PC-9 (cell line): ENCODE measurements at regions of chr7 and their contacts with region 1.

Region 1: DNA sequence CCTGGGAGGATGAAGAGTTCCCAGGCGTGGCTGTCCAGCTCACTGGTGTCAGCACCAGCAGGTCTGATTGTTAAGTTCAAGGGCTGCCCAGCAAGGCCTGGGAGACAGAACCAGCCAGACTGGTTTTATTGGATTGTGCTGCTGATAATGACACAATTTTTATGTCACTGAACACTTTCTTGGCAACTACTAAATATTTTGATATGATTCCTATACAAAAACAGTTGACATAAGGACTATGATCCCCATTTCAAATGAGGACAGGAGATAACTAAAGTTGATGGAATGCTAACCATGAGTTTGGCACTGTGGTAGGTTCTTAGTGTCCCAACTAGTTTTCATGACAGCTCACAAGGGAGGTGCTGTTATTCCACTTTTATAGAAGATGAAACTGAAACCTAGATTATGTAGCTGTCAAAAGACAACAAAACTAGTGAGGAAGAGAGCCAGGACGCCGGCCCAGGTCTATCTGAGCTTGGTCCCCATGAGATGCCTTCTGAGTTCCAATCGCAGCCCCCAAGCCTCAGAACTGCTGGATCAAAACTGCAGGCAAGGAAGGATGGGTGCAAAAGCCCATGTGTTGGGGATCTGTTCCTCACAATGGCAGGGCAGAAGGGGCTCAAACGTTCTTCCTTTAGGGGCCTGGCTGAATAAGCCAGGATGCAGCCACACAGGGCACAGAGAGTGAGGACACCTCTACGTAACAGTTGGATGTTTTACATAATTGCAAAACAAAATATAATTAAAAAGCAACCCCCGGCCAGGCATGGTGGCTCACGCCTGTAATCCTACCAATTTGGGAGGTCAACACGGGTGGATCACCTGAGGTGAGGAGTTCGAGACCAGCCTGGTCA is 52.8 kb downstream of the COBL start:
- DNase-seq: peak; percentile 84 to 100
- H3K4me3 ChIP-seq: peak overlapping the region; percentile 45; the same call in 1 of the 2 replicates
- H3K27ac ChIP-seq: peak overlapping the region; percentile 68
- H3K4me1 ChIP-seq: peaks cover 36% of the 10 kb centered on the region
- H3K27me3 ChIP-seq: no peaks in the 10 kb centered on the region
- CTCF ChIP-seq: no peak

Region 2: DNA sequence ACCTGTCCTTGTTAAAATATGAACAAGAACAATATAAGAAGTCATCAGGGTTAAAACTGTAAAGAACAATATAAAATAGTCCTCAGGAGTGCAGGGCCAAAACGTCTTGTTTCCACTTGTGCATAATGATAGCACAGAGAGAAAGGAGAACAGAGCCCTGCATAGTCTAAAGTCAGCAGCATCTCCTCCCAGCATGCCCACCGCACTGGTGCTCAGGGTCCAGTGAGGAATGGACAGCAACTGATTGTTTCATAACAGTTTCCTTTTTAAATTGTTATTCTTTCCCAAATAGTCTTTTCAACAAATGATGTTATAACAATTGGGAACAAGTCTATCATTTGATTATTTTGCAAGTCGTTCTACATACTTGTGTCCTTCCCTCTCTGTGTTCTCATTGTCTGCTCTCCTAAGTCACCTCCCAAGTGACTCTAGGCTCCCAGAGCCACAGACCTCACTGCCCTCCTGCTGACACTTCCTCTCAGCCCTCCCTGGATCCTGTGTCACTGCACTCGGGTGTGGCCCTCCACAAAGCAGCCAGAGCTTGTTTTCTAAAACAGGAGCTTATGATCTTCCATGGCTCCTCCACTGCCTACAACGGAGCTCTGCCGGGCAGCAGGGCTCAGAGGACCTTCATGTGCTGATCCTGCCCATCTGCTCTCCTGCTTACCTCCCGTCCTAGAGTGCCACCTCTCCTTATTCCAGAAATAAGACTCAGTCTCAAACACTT is 25.2 kb after region 1 on chr7:
- CTCF ChIA-PET with region 1: no interaction called
- POLR2A ChIA-PET with region 1: no interaction called
- intact Hi-C with region 1: loop called (anchors 2 kb)
- DNase-seq: peak in 1 of 2 experiments; percentile 52
- H3K4me3 ChIP-seq: no peak overlapping the region
- H3K27ac ChIP-seq: no peak overlapping the region
- H3K4me1 ChIP-seq: peaks cover 21% of the 10 kb centered on the region
- H3K27me3 ChIP-seq: no peaks in the 10 kb centered on the region
- CTCF ChIP-seq: no peak

Region 3: DNA sequence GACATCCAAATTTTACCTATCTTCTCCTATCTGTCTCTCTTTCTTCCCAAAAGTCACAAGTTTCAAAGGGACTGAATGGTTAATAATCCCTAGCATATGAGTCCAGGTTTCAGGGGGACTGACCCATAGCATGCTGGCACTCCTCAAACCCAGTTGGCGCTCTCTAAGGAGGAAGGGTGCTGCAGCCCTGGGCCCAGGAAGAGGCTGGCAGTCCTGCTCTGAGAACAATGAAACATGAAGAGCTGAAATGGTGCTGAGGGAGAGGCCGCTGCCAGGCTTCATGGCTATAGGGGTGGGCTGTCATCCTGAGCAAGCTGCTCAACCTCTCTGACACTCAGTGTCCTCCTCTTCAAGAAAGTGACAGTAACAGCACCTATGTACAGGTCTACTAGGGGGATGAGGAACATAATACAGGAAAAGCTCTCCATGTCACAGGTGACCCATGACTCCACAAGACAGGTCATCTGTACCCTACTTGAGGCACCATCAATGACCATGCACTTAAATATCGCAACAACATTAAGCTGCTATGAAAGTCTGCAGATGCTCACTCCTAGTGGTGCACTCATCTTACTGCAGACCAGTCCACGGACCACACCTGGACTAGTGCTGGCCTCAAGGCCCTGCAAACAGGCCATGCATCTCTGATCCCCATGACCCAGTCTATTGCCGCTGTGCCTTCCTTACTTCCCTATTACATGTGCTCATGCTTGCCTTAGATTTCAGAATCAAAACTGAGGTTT is 35.7 kb after region 1 on chr7:
- CTCF ChIA-PET with region 1: no interaction called
- POLR2A ChIA-PET with region 1: interaction called, 4 read pairs
- intact Hi-C with region 1: loop called (anchors 5 kb)
- DNase-seq: no peak
- H3K4me3 ChIP-seq: no peak overlapping the region
- H3K27ac ChIP-seq: no peak overlapping the region
- H3K4me1 ChIP-seq: peaks cover 37% of the 10 kb centered on the region
- H3K27me3 ChIP-seq: no peaks in the 10 kb centered on the region
- CTCF ChIP-seq: no peak; the same call in 1 of the 2 replicates

Region 4: GRCh38 chr7:51315393-51316261 is 51.8 kb after region 1 on chr7:
- CTCF ChIA-PET with region 1: no interaction called
- POLR2A ChIA-PET with region 1: interaction called, 6 read pairs
- intact Hi-C with region 1: loop called (anchors 1 kb)
- DNase-seq: peak; percentile 92 to 98
- H3K4me3 ChIP-seq: peak overlapping the region; percentile 71
- H3K27ac ChIP-seq: peak overlapping the region; percentile 86
- H3K4me1 ChIP-seq: peaks cover 34% of the 10 kb centered on the region
- H3K27me3 ChIP-seq: no peaks in the 10 kb centered on the region
- CTCF ChIP-seq: no peak

Region 5: DNA sequence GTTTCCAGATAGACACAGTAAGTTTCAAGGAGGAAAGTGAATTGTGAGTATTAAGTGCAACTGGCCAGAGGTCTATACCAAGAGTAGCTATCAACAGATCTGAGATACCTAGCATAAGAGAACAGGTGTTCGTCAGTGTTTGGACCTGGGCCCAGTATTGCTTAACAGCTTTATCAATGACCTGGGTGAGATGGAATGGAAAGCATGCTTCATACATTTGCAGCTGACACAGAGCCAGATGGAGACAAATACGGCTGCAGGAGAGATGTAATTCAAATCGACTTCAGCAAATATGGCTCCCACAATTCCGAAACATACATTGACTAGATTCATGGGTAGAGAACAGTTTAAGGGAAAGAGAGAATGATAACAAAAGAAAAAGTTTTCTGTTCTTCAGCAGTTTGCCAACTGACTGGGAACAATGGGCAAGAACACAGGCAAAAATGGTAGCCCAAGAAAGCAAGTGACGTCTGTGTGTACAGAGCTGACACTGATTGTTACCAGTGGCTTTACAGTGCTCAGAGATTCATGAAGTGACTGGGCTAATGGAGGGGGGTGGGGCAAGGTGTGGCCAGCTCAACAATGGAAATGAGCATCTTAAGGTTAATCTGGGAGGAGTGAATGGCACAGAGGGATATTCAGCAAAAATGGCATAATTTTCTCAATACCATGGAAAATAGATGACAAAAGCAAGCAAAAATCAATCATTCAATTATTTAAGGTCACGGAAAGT is 80.7 kb after region 1 on chr7:
- CTCF ChIA-PET with region 1: no interaction called
- POLR2A ChIA-PET with region 1: no interaction called
- intact Hi-C with region 1: loop called (anchors 1 kb)
- DNase-seq: peak; percentile 56 to 93
- H3K4me3 ChIP-seq: no peak overlapping the region
- H3K27ac ChIP-seq: no peak overlapping the region
- H3K4me1 ChIP-seq: peaks cover 34% of the 10 kb centered on the region
- H3K27me3 ChIP-seq: no peaks in the 10 kb centered on the region
- CTCF ChIP-seq: no peak

Region 6: DNA sequence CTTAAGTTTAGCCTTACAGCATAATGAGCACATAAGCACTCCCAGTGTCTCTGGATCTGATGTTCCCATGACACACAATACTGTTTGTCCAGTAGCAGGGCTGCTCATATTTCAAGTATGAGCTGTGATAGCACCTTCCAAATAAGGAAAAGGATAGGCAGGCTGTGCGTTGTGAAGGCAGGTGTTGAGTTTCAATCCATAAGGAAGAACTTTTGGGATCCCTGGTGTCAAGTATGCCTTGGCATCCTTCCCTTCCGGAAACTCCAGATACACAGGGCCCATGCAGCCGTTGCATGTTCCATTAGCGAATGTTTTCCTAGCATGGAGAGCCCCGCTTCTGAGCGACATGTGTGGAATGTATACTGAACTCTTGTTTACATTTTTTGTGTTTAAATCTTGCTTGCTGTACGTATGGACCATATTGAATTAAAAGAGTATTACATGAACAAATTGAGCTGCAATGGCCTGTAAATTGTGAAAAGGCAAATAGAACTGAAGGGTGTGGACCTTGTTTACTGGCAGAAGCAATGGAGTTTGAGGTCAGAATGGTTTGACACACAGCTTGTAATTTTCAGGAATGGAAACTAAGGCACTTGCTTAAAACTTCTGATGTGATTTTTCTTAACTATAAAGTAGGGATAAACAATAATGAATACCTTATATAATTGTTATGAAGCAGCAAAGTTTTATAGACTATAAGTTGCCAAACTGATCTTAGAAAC is 86.5 kb after region 1 on chr7:
- CTCF ChIA-PET with region 1: no interaction called
- POLR2A ChIA-PET with region 1: no interaction called
- intact Hi-C with region 1: loop called (anchors 1 kb)
- DNase-seq: peak; percentile 82 to 100
- H3K4me3 ChIP-seq: peak overlapping the region; percentile 7; the same call in 1 of the 2 replicates
- H3K27ac ChIP-seq: peak overlapping the region; percentile 65
- H3K4me1 ChIP-seq: peaks cover 23% of the 10 kb centered on the region
- H3K27me3 ChIP-seq: no peaks in the 10 kb centered on the region
- CTCF ChIP-seq: no peak

Region 7: DNA sequence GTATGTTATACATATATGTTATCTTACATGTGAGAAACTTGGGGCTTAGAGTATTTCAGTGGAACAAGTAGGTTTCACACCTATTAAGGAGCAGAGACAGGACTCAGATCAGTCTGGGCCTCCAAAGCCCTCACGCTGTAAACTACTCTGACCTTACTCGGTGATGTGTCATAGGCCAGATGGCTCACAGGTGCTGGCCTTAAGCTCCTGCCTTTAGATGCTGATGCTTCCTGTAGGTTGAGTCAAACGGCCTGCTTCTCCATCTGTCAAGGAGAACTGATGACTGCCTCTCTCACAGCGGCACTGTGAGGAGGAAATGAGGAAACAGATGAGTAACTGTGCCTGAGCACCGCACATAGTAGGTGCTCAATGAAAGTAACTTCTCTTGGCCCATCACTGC is 365.3 kb after region 1 on chr7:
- CTCF ChIA-PET with region 1: no interaction called
- POLR2A ChIA-PET with region 1: no interaction called
- intact Hi-C with region 1: no loop called
- DNase-seq: no peak
- H3K4me3 ChIP-seq: no peak overlapping the region
- H3K27ac ChIP-seq: no peak overlapping the region
- H3K4me1 ChIP-seq: no peaks in the 10 kb centered on the region
- H3K27me3 ChIP-seq: peaks cover 77% of the 10 kb centered on the region
- CTCF ChIP-seq: no peak